ENCODE measurements at regions of chr22 and their contacts with region 1.

Region 1: GRCh38 chr22:40764763-40765441 is 54.2 kb downstream of the SLC25A17 start:
- DNase-seq: peak in 6 of 9 donors; percentile 38 to 60 (median 52)
- ATAC-seq: peak; percentile 73
- H3K4me3 ChIP-seq: no peak overlapping the region
- H3K4me3 Mint-ChIP-seq: peak overlapping the region; percentile 24 to 72 (median 58)
- H3K27ac ChIP-seq: peak overlapping the region; percentile 42
- H3K27ac Mint-ChIP-seq: peak overlapping the region; percentile 72 to 97 (median 91)
- H3K4me1 ChIP-seq: peaks cover 0 to 11% of the 10 kb centered on the region in 2 donors
- H3K4me1 Mint-ChIP-seq: peaks cover 15 to 31% (median 24%) of the 10 kb centered on the region in 7 donors
- H3K27me3 ChIP-seq: no peaks in the 10 kb centered on the region
- H3K27me3 Mint-ChIP-seq: no peaks in the 10 kb centered on the region

Region 2: DNA sequence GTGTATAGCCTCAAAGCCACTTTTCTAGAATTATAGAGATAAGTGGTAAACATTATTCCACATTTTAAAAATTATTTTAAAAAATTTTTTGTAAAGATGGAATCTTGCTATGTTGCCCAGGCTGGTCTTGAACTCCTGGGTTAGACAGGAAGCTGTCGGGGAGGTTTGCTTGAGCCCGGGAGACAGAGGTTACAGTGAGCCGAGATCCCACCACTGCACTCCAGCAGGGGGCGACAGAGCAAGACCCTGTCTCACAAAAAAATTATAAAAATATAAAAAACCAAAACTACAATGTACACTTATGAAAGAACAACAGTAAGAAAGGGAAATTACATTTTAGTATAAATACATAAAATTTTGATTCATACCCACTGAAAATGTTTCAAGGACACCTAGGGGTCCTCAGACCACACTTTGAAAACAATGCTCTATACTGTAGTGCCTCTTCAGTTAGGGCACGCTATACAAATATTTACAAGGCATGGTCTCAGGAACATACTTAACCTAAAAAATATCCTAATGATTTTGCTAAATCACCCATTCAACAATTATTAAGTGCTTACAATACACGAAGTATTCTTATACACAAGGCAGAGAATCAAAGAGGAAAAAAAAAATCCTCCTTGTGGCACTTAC is 239.5 kb before region 1 on chr22:
- CTCF ChIA-PET with region 1: no interaction called
- POLR2A ChIA-PET with region 1: no interaction called
- intact Hi-C with region 1: loop called in 1 of 2 experiments (anchors 1 kb)
- DNase-seq: peak; percentile 58 to 80 (median 76)
- ATAC-seq: peak; percentile 74
- H3K4me3 ChIP-seq: no peak overlapping the region
- H3K4me3 Mint-ChIP-seq: peak overlapping the region in 1 of 10 donors; percentile 48
- H3K27ac ChIP-seq: no peak overlapping the region
- H3K27ac Mint-ChIP-seq: peak overlapping the region in 8 of 9 donors; percentile 7 to 86 (median 58)
- H3K4me1 ChIP-seq: peaks cover 0 to 11% of the 10 kb centered on the region in 2 donors
- H3K4me1 Mint-ChIP-seq: peaks cover 13 to 55% (median 51%) of the 10 kb centered on the region in 7 donors
- H3K27me3 ChIP-seq: no peaks in the 10 kb centered on the region
- H3K27me3 Mint-ChIP-seq: no peaks in the 10 kb centered on the region

Region 3: GRCh38 chr22:40714192-40714951 is 50.5 kb before region 1 on chr22:
- CTCF ChIA-PET with region 1: no interaction called
- POLR2A ChIA-PET with region 1: interaction called, 5 read pairs
- intact Hi-C with region 1: loop called in 1 of 2 experiments (anchors 2 kb)
- DNase-seq: no peak
- ATAC-seq: no peak
- H3K4me3 ChIP-seq: no peak overlapping the region
- H3K4me3 Mint-ChIP-seq: peak overlapping the region in 9 of 10 donors; percentile 14 to 76 (median 62)
- H3K27ac ChIP-seq: no peak overlapping the region
- H3K27ac Mint-ChIP-seq: peak overlapping the region in 2 of 9 donors; percentile 31 to 46
- H3K4me1 ChIP-seq: peaks cover 0 to 5% of the 10 kb centered on the region in 2 donors
- H3K4me1 Mint-ChIP-seq: peaks cover 10 to 27% (median 21%) of the 10 kb centered on the region in 7 donors
- H3K27me3 ChIP-seq: no peaks in the 10 kb centered on the region
- H3K27me3 Mint-ChIP-seq: peaks cover 0 to 11% (median 0%) of the 10 kb centered on the region in 5 donors

Region 4: GRCh38 chr22:40728731-40729189 is 36.1 kb before region 1 on chr22:
- CTCF ChIA-PET with region 1: interaction called, 6 read pairs
- POLR2A ChIA-PET with region 1: interaction called, 3 read pairs
- intact Hi-C with region 1: loop called in 1 of 2 experiments (anchors 1 kb)
- DNase-seq: peak; percentile 29 to 87 (median 83)
- ATAC-seq: peak; percentile 75
- H3K4me3 ChIP-seq: peak overlapping the region; percentile 40
- H3K4me3 Mint-ChIP-seq: peak overlapping the region; percentile 61 to 81 (median 67)
- H3K27ac ChIP-seq: peak overlapping the region; percentile 80
- H3K27ac Mint-ChIP-seq: peak overlapping the region; percentile 86 to 99 (median 98)
- H3K4me1 ChIP-seq: peaks cover 42 to 62% of the 10 kb centered on the region in 2 donors
- H3K4me1 Mint-ChIP-seq: peaks cover 37 to 66% (median 54%) of the 10 kb centered on the region in 7 donors
- H3K27me3 ChIP-seq: no peaks in the 10 kb centered on the region
- H3K27me3 Mint-ChIP-seq: peaks cover 0 to under 1% (median 0%) of the 10 kb centered on the region in 5 donors

Region 5: GRCh38 chr22:40818747-40819598 is 54.1 kb after region 1 on chr22 and contains the start of gene SLC25A17:
- CTCF ChIA-PET with region 1: no interaction called
- POLR2A ChIA-PET with region 1: no interaction called
- intact Hi-C with region 1: loop called in 1 of 2 experiments (anchors 5 kb)
- DNase-seq: peak; percentile 71 to 88 (median 82)
- ATAC-seq: peak; percentile 95
- H3K4me3 ChIP-seq: peak within 1 kb of the TSS; percentile 100
- H3K4me3 Mint-ChIP-seq: peak within 1 kb of the TSS; percentile 79 to 99 (median 93)
- H3K27ac ChIP-seq: peak within 1 kb of the TSS; percentile 86
- H3K27ac Mint-ChIP-seq: peak within 1 kb of the TSS; percentile 57 to 96 (median 88)
- H3K4me1 ChIP-seq: peaks cover 9 to 26% of the 10 kb centered on the region in 2 donors
- H3K4me1 Mint-ChIP-seq: peaks cover 22 to 42% (median 37%) of the 10 kb centered on the region in 7 donors
- H3K27me3 ChIP-seq: no peaks in the 10 kb centered on the region
- H3K27me3 Mint-ChIP-seq: no peaks in the 10 kb centered on the region
- total RNA-seq, gene SLC25A17: 6.8 to 22.1 (median 13.1) TPM

Region 6: DNA sequence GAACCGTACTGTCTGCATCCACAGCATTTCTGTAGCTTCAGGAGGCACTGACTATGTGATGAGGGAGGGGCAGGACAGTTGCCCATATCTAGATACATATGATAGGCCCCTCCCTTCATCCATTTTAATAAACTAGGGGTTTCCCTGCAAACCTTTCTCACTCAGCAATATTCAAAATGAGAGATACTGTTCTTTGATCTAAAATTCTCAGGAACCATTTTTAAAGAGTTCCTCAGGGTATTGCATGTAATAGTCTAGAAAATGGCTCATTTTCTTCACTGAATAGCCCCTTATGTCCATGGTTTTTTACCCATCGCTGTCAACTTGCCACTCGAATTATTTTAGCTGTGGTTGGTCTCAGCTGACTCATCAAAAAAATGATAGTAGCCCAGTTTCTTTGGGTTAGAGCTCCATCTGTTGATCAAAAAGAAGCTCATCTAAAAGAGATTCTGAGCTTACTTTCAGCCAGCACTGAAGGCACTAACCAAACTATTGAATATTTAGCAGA is 134.0 kb after region 1 on chr22:
- CTCF ChIA-PET with region 1: no interaction called
- POLR2A ChIA-PET with region 1: no interaction called
- intact Hi-C with region 1: loop called in 1 of 2 experiments (anchors 1 kb)
- DNase-seq: peak in 7 of 9 donors; percentile 12 to 52 (median 37)
- ATAC-seq: peak; percentile 67
- H3K4me3 ChIP-seq: no peak overlapping the region
- H3K4me3 Mint-ChIP-seq: peak overlapping the region in 1 of 10 donors; percentile 28
- H3K27ac ChIP-seq: no peak overlapping the region
- H3K27ac Mint-ChIP-seq: peak overlapping the region in 2 of 9 donors; percentile 36 to 44
- H3K4me1 ChIP-seq: no peaks in the 10 kb centered on the region
- H3K4me1 Mint-ChIP-seq: peaks cover 4 to 9% (median 5%) of the 10 kb centered on the region in 7 donors
- H3K27me3 ChIP-seq: no peaks in the 10 kb centered on the region
- H3K27me3 Mint-ChIP-seq: no peaks in the 10 kb centered on the region